ENCODE measurements at regions of chr12 and their contacts with region 1.

Region 1: DNA sequence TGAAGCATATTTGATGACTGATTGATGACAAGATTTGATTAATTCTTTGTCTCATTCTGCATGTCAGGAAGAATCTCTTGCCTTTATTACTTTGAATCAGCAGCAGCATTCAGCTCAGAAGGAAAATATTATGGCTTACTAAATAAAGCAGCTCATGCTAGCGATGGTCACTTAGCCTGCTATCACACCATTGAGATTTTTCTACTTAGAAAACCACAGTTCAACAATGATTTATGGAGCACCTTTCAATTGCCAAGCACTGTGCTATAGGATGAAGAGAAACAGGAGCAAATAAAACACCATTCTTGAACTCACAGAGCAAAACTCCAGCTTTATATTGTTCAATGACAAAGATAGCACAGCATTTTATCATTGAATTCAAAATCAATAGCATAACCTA is 197.7 kb downstream of the CPNE8 start:
- DNase-seq: no peak
- ATAC-seq: no peak
- H3K4me3 ChIP-seq: no peak overlapping the region
- H3K27ac ChIP-seq: no peak overlapping the region
- H3K4me1 ChIP-seq: no peaks in the 10 kb centered on the region
- H3K27me3 ChIP-seq: no peaks in the 10 kb centered on the region
- CTCF ChIP-seq: no peak
- POLR2A ChIP-seq: no peak

Region 2: DNA sequence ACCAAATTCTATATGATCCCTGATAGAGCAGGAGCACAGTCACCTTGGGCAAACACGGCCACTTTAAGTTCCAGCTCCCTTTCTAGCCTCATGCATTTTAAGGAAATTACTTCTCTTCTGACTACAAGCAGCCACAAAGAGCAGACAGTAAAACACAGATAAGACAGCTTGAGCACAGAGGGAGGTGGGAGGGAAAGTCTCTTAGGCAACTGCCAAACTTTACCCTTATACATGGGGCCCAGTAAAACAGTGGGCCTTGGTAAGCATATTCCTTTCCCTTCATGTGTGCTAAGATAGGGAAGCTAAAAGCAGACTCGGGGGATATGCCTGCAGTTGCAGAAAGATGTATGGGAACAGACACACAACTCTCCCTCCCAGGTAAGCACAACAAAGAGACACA is 38.1 kb before region 1 on chr12:
- in situ Hi-C with region 1: no loop called
- intact Hi-C with region 1: loop called (anchors 2 kb)
- DNase-seq: no peak
- ATAC-seq: no peak
- H3K4me3 ChIP-seq: no peak overlapping the region
- H3K27ac ChIP-seq: no peak overlapping the region
- H3K4me1 ChIP-seq: no peaks in the 10 kb centered on the region
- H3K27me3 ChIP-seq: no peaks in the 10 kb centered on the region
- CTCF ChIP-seq: no peak
- POLR2A ChIP-seq: no peak

Measured in gastrocnemius medialis (tissue), 4 donors.